Panc1 (cell line): ENCODE measurements at regions of chr22 and their contacts with region 1.

Region 1: GRCh38 chr22:39405346-39406085 is 5.9 kb downstream of the TAB1 start:
- DNase-seq: no peak
- ATAC-seq: no peak
- H3K4me3 ChIP-seq: no peak overlapping the region
- H3K27ac ChIP-seq: no peak overlapping the region
- H3K4me1 ChIP-seq: no peaks in the 10 kb centered on the region; the same call in 1 of the 2 replicates
- H3K27me3 ChIP-seq: no peaks in the 10 kb centered on the region
- CTCF ChIP-seq: no peak

Region 2: DNA sequence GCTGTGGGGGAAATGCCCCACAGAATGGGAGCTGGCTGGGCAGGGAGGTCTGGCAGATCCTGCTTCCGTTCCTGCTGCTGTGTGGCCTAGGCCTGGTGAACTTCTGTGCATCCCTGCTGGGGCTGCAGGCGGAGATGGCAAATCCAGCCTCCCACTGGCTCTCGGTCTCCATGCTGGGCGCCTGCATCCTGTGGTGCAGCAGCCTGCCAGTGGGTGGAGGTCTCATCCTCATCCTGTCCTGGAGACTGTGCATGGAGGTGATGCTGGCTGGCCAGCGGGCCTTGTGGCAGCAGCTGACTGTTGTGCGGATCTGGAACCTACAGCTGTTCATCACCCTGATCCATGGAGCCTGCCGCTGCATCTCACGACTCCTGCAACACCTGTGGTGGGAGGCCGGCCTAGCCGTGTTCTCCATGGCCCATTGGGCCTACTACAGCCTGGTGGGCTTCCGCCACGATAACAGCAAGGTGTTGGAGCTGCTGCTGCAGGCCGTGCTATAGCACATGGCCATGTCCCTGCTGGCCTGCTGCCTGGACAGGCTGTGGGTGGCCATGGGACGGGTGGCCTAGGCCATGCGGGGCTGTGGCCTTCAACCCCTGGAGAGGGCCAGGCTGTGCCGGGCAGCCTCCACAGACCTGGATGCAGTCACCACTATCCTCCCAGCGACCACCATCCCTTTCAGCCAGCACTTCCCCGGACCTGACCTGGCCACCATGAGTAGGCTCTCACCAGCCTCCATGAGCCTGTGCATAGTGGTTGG is 77.3 kb before region 1 on chr22:
- CTCF ChIA-PET with region 1: interaction called, 13 read pairs
- POLR2A ChIA-PET with region 1: no interaction called
- in situ Hi-C with region 1: no loop called
- intact Hi-C with region 1: no loop called
- DNase-seq: no peak
- ATAC-seq: no peak
- H3K4me3 ChIP-seq: no peak overlapping the region
- H3K27ac ChIP-seq: no peak overlapping the region
- H3K4me1 ChIP-seq: no peaks in the 10 kb centered on the region
- H3K27me3 ChIP-seq: no peaks in the 10 kb centered on the region
- CTCF ChIP-seq: no peak